ENCODE measurements at regions of chr6 and their contacts with region 1.

Region 1: GRCh38 chr6:56808871-56809359 is 146.0 kb upstream of the BEND6 start:
- DNase-seq: no peak
- H3K4me3 ChIP-seq: no peak overlapping the region
- H3K27ac ChIP-seq: no peak overlapping the region
- H3K4me1 ChIP-seq: no peaks in the 10 kb centered on the region
- H3K27me3 ChIP-seq: no peaks in the 10 kb centered on the region
- CTCF ChIP-seq: no peak
- EP300 ChIP-seq: no peak
- POLR2A ChIP-seq: no peak

Region 2: DNA sequence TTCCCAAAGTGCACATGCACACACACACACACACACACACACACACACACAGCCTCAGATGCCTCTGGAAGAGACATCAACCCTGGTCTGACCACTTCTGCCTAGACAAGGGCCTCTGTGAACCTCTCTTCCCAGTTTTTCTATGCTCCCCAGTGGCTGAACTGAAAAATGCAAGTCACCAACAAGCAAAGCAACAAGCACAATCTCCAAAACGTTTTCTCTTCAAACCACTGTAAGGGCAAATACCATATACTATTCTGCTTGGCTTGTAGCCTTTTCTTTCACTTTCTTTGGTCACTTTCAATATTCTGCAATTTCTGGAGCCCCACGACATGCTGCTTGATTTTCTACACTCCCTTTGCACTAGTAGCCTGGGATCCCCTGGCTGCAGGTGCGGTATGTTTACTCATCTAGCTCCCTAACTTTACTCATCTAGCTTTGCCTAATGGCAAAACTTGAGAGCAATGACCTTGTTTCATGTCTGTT is 44.8 kb before region 1 on chr6:
- in situ Hi-C with region 1: no loop called
- intact Hi-C with region 1: loop called (anchors 1 kb)
- DNase-seq: no peak
- H3K4me3 ChIP-seq: no peak overlapping the region
- H3K27ac ChIP-seq: peak overlapping the region in 3 of 4 donors; percentile 26 to 44 (median 42)
- H3K4me1 ChIP-seq: peaks cover 0 to 43% (median 10%) of the 10 kb centered on the region in 4 donors
- H3K27me3 ChIP-seq: no peaks in the 10 kb centered on the region
- CTCF ChIP-seq: peak in 4 of 5 experiments; percentile 27 to 49 (median 32)
- EP300 ChIP-seq: no peak
- POLR2A ChIP-seq: no peak

Region 3: DNA sequence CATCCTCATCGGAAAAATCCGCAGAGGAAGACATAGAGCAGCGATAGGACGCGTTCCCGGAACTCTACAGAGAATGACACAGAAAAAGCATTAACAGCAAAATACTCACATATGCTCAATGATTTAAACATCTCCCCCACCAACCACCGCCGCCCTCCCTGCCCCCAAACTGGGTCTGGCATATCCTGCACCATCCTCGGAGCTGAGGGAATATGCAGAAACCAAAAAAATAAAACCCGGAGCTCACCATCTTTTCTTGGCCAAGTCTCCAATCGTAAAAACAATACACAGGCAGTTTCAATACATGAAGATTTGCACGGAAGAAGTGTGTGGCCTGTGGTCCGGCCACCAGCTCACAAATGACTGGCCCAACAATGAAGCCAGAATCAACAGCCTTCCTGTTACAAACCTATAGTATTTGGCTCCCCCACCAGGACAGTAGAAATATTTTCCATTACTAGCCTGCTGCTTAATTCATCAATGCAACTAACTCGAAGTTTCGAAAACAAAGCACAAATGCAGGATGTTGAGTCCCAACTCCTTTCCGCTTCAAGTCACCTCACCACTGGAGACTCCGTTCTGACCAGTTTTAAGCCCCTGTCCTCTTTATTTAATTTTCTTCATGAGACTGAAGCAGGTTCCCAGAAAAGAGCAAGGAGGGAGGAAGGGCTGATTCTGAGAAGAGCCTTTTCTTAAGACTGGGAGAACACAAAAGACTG is 42.8 kb after region 1 on chr6:
- in situ Hi-C with region 1: no loop called
- intact Hi-C with region 1: no loop called
- DNase-seq: no peak
- H3K4me3 ChIP-seq: peak overlapping the region in 3 of 4 donors; percentile 20 to 47 (median 33)
- H3K27ac ChIP-seq: peak overlapping the region; percentile 47 to 69 (median 64)
- H3K4me1 ChIP-seq: peaks cover 0 to 17% (median 3%) of the 10 kb centered on the region in 4 donors
- H3K27me3 ChIP-seq: no peaks in the 10 kb centered on the region
- CTCF ChIP-seq: peak; percentile 38 to 53 (median 40)
- EP300 ChIP-seq: no peak
- POLR2A ChIP-seq: no peak

Region 4: GRCh38 chr6:57324538-57324937 is 515.6 kb after region 1 on chr6:
- in situ Hi-C with region 1: no loop called
- intact Hi-C with region 1: no loop called
- DNase-seq: no peak
- H3K4me3 ChIP-seq: no peak overlapping the region
- H3K27ac ChIP-seq: no peak overlapping the region
- H3K4me1 ChIP-seq: no peaks in the 10 kb centered on the region
- H3K27me3 ChIP-seq: no peaks in the 10 kb centered on the region
- CTCF ChIP-seq: peak; percentile 21 to 41 (median 35)
- EP300 ChIP-seq: no peak
- POLR2A ChIP-seq: no peak